B cell (primary cell): ENCODE measurements at regions of chrX and their contacts with region 1.

Region 1: DNA sequence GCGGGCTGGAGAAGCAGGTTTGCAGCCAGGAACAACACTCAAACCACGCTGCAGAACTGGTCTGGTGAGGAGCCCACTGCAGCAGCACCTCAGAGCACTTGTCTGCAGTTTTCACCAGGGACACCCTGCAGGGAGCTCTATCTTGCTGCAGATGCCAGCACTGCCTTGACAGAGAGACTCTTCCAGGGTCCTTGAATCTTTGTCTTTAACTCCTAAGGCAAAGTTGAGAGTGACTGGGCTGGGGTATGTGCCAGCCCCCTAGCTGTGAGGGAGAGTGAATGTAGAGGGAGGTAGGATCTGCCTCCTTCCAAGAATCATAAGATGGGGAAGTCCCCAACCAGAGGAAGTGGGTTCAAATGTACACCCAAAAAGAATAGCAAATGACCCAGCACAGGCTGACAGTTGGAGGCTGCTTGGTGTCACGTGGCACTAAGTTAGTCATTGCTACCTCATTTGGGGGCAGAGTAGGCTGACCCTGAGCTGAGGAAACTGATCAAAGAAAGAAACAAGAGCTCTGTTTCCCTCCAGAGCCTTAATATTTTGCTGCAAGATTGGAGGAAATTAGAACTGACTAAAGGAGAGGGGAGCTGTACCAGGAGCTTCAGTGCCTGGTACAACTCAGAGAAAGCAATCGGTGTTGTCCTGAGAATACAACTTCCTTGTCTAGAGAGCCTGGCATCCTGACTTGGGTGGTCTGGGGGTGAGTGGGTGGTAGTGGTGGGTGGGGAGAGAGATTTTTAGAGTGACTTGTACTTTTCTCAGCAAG is 28.2 kb upstream of the HUWE1 start:
- DNase-seq: peak; percentile 54
- ATAC-seq: peak; percentile 63
- H3K4me3 ChIP-seq: peak overlapping the region in 1 of 5 experiments; percentile 33
- H3K4me3 Mint-ChIP-seq: peak overlapping the region; percentile 74
- H3K27ac ChIP-seq: peak overlapping the region; percentile 83 to 89
- H3K27ac Mint-ChIP-seq: peak overlapping the region; percentile 93
- H3K4me1 ChIP-seq: peaks cover 42 to 43% of the 10 kb centered on the region in 2 donors
- H3K4me1 Mint-ChIP-seq: peaks cover 44% of the 10 kb centered on the region
- H3K27me3 ChIP-seq: no peaks in the 10 kb centered on the region
- H3K27me3 Mint-ChIP-seq: no peaks in the 10 kb centered on the region
- CTCF ChIP-seq: no peak

Region 2: GRCh38 chrX:53683556-53684414 is 31.0 kb before region 1 on chrX:
- CTCF ChIA-PET with region 1: interaction called, 7 read pairs
- POLR2A ChIA-PET with region 1: no interaction called
- intact Hi-C with region 1: loop called (anchors 1 kb)
- DNase-seq: peak; percentile 96
- ATAC-seq: peak; percentile 70
- H3K4me3 ChIP-seq: peak overlapping the region; percentile 65 to 77 (median 69)
- H3K4me3 Mint-ChIP-seq: peak overlapping the region; percentile 94
- H3K27ac ChIP-seq: peak overlapping the region; percentile 95 to 98
- H3K27ac Mint-ChIP-seq: peak overlapping the region; percentile 99
- H3K4me1 ChIP-seq: peaks cover 21 to 26% of the 10 kb centered on the region in 2 donors
- H3K4me1 Mint-ChIP-seq: peaks cover 39% of the 10 kb centered on the region
- H3K27me3 ChIP-seq: no peaks in the 10 kb centered on the region
- H3K27me3 Mint-ChIP-seq: no peaks in the 10 kb centered on the region
- CTCF ChIP-seq: no peak

Region 3: GRCh38 chrX:53704294-53704693 is 10.5 kb before region 1 on chrX:
- CTCF ChIA-PET with region 1: no interaction called
- POLR2A ChIA-PET with region 1: no interaction called
- intact Hi-C with region 1: no loop called
- DNase-seq: peak; percentile 47
- ATAC-seq: peak; percentile 64
- H3K4me3 ChIP-seq: no peak overlapping the region
- H3K4me3 Mint-ChIP-seq: no peak overlapping the region
- H3K27ac ChIP-seq: no peak overlapping the region
- H3K27ac Mint-ChIP-seq: peak overlapping the region; percentile 64
- H3K4me1 ChIP-seq: peaks cover 3 to 7% of the 10 kb centered on the region in 2 donors
- H3K4me1 Mint-ChIP-seq: peaks cover 6% of the 10 kb centered on the region
- H3K27me3 ChIP-seq: no peaks in the 10 kb centered on the region
- H3K27me3 Mint-ChIP-seq: no peaks in the 10 kb centered on the region
- CTCF ChIP-seq: no peak